ENCODE measurements at regions of chr19 and their contacts with region 1.

Region 1: GRCh38 chr19:35716801-35717666 is 769 bp upstream of the KMT2B start:
- DNase-seq: peak; percentile 86 to 91 (median 89)
- H3K4me3 ChIP-seq: peak overlapping the region; percentile 71 to 91 (median 78)
- H3K4me3 Mint-ChIP-seq: peak overlapping the region; percentile 95 to 99
- H3K27ac ChIP-seq: peak overlapping the region; percentile 52 to 79
- H3K27ac Mint-ChIP-seq: peak overlapping the region; percentile 71 to 93 (median 85)
- H3K4me1 ChIP-seq: peaks cover 23 to 37% of the 10 kb centered on the region in 2 donors
- H3K4me1 Mint-ChIP-seq: peaks cover 30% of the 10 kb centered on the region
- H3K27me3 ChIP-seq: no peaks in the 10 kb centered on the region
- H3K27me3 Mint-ChIP-seq: peaks cover 4 to 6% (median 4%) of the 10 kb centered on the region in 3 donors
- CTCF ChIP-seq: peak; percentile 99

Region 2: GRCh38 chr19:35509861-35510625 is 207.0 kb before region 1 on chr19:
- intact Hi-C with region 1: loop called (anchors 2 kb)
- DNase-seq: peak; percentile 42 to 60 (median 58)
- H3K4me3 ChIP-seq: no peak overlapping the region
- H3K4me3 Mint-ChIP-seq: peak overlapping the region in 1 of 2 donors; percentile 71
- H3K27ac ChIP-seq: no peak overlapping the region
- H3K27ac Mint-ChIP-seq: no peak overlapping the region
- H3K4me1 ChIP-seq: peaks cover 0 to 4% of the 10 kb centered on the region in 2 donors
- H3K4me1 Mint-ChIP-seq: peaks cover 7% of the 10 kb centered on the region
- H3K27me3 ChIP-seq: peaks cover 18 to 48% of the 10 kb centered on the region in 2 donors
- H3K27me3 Mint-ChIP-seq: peaks cover 55 to 72% (median 63%) of the 10 kb centered on the region in 3 donors
- CTCF ChIP-seq: peak; percentile 98

Region 3: DNA sequence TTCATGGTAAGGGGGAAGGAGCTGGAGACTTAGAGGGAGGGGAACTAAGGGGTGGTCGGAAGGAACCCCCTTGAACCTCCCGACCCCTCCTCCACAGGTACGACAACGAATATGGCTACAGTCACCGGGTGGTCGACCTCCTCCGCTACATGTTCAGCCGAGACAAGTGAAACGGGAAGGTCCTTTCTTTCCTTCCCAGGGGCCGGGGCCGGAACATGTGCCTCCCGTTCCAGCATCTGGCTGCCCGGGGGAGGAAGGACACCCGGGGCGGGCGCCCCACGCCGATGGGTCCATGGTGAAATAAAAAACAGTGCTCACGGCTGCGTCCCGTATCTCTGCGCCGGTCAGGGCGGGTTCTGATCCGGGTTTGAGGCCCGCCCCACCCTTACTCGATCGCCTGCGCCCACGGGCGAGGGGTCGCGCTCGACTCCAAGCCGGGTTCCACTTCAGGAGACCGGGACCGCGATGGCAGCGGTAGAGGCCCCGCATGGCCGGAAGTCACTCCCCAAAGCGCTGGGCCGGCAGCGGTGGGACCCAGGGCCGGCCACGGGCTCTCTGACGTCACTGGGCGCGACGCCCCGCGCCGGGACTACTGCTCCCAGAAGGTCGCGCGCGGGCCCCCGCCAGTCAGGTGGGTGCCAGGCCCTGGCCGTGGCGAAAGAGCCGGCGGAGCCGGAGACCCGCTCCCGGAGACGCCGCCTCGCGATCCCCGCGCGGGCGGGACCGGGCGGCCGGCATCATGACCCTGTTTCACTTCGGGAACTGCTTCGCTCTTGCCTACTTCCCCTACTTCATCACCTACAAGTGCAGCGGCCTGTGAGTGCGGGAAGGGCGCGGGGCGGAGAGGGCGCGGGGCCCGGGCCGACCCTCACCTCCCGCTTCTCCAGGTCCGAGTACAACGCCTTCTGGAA is 171.8 kb before region 1 on chr19 and contains the start of gene TMEM147:
- intact Hi-C with region 1: loop called (anchors 1 to 5 kb)
- DNase-seq: peak; percentile 69 to 83 (median 82)
- H3K4me3 ChIP-seq: peak within 1 kb of the TSS; percentile 81 to 90 (median 83)
- H3K4me3 Mint-ChIP-seq: peak within 1 kb of the TSS; percentile 87 to 93
- H3K27ac ChIP-seq: peak within 1 kb of the TSS; percentile 71 to 88
- H3K27ac Mint-ChIP-seq: peak within 1 kb of the TSS; percentile 68 to 92 (median 77)
- H3K4me1 ChIP-seq: peaks cover 21 to 28% of the 10 kb centered on the region in 2 donors
- H3K4me1 Mint-ChIP-seq: peaks cover 30% of the 10 kb centered on the region
- H3K27me3 ChIP-seq: no peaks in the 10 kb centered on the region
- H3K27me3 Mint-ChIP-seq: peaks cover 0 to 2% (median 0%) of the 10 kb centered on the region in 3 donors
- CTCF ChIP-seq: no peak
- polyA plus RNA-seq, gene TMEM147: 75.5 to 165 (median 165) TPM

Region 4: GRCh38 chr19:35628565-35629331 is 88.3 kb before region 1 on chr19 and contains the start of gene RBM42:
- intact Hi-C with region 1: loop called in 1 of 2 experiments (anchors 5 kb)
- DNase-seq: peak; percentile 97 to 98 (median 97)
- H3K4me3 ChIP-seq: peak within 1 kb of the TSS; percentile 41 to 99 (median 98)
- H3K4me3 Mint-ChIP-seq: peak within 1 kb of the TSS; percentile 93 to 98
- H3K27ac ChIP-seq: peak within 1 kb of the TSS; percentile 85 to 99
- H3K27ac Mint-ChIP-seq: peak within 1 kb of the TSS; percentile 96 to 100 (median 96)
- H3K4me1 ChIP-seq: peaks cover 14 to 15% of the 10 kb centered on the region in 2 donors
- H3K4me1 Mint-ChIP-seq: peaks cover 13% of the 10 kb centered on the region
- H3K27me3 ChIP-seq: no peaks in the 10 kb centered on the region
- H3K27me3 Mint-ChIP-seq: peaks cover 0 to 3% (median 2%) of the 10 kb centered on the region in 3 donors
- CTCF ChIP-seq: no peak
- polyA plus RNA-seq, gene RBM42: 29.5 to 53.3 (median 50.3) TPM

Region 5: DNA sequence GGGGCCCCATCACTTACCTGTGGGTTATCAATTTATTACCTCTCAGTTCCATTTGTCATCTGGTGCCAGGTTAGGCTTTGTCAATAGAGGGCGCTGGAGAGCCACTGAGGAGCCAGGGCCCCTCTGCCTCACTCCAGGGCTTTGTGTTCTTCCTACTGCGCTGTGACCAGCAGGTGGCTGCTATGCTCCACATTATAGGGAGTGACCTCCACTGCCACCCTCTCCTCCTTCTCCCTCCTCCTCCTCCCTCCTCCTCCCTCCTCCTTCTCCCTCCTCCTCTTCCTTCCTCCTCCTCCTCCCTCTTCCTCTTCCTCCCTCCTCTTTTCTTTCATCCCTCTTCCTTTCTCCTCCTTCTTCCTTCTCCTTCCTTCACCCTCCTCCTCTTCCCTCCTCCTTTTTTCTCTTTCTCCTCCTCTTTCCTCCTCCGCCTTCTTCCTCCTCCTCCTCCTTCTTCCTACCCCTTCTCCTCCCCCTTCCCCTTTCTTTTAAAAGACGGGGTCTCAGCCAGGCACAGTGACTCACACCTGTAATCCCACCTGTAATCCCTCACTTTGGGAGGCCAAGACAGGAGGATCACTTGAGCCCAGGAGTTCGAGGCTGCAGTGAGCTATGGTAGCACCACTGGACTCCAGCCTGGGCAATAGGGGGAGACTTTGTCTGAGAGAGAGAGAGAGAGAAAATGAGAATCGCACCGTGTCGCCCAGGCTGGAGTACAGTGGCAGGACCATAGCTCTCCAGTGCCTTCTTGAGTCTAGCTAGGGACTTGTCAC is 23.0 kb before region 1 on chr19:
- intact Hi-C with region 1: loop called (anchors 1 kb)
- DNase-seq: peak; percentile 72 to 82 (median 78)
- H3K4me3 ChIP-seq: no peak overlapping the region
- H3K4me3 Mint-ChIP-seq: no peak overlapping the region
- H3K27ac ChIP-seq: no peak overlapping the region
- H3K27ac Mint-ChIP-seq: peak overlapping the region in 1 of 7 donors; percentile 40
- H3K4me1 ChIP-seq: no peaks in the 10 kb centered on the region
- H3K4me1 Mint-ChIP-seq: no peaks in the 10 kb centered on the region
- H3K27me3 ChIP-seq: no peaks in the 10 kb centered on the region
- H3K27me3 Mint-ChIP-seq: peaks cover 2 to 10% (median 8%) of the 10 kb centered on the region in 3 donors
- CTCF ChIP-seq: peak; percentile 95

Measured in CD14-positive monocyte (primary cell).